Caco-2 (cell line): ENCODE measurements at regions of chr2 and their contacts with region 1.

Region 1: DNA sequence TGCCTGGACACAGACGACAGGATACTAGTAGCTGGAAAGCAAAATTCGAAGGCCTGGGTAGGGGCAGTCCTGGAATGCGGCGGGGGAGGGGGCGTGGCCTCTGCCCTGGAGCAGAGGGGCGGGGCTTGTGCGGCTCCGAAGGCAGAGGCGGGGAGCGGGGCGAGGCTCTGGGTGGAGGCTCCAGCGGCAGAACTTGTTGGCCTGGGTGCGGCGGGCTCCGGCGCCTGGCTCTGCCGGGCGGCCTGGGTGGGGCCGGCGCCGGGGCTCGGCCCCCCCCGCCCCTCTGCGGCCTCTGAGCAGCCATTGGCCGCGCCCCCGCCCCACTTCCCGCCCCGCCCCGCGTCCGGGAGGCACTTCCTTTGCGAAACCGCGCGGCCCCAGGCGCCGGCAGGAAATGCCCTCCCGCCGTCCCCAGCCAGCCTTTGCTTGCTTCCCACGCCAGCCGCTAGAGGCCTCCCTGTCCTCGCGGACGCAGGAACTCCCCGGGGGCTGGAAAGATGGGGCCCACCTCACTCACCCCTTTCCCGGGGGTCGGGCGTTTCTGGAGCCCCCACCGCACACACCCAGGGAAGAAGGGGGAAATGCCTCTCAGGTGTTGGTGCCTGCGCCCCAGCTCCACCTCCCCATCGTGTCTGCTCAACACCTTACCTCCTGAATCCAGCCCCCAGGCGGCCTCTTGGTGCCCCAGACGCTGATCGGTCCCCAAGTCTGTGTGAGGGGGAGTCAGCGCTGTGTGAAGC is 6.7 kb downstream of the CTDSP1 start:
- DNase-seq: peak; percentile 97 to 98
- H3K4me3 ChIP-seq: peak overlapping the region; percentile 39
- H3K4me3 Mint-ChIP-seq: peak overlapping the region; percentile 89
- H3K27ac Mint-ChIP-seq: peak overlapping the region; percentile 99
- H3K4me1 ChIP-seq: peaks cover 29% of the 10 kb centered on the region
- H3K4me1 Mint-ChIP-seq: peaks cover 38% of the 10 kb centered on the region
- H3K27me3 ChIP-seq: no peaks in the 10 kb centered on the region
- H3K27me3 Mint-ChIP-seq: no peaks in the 10 kb centered on the region
- CTCF ChIP-seq: peak; percentile 83 to 96

Region 2: DNA sequence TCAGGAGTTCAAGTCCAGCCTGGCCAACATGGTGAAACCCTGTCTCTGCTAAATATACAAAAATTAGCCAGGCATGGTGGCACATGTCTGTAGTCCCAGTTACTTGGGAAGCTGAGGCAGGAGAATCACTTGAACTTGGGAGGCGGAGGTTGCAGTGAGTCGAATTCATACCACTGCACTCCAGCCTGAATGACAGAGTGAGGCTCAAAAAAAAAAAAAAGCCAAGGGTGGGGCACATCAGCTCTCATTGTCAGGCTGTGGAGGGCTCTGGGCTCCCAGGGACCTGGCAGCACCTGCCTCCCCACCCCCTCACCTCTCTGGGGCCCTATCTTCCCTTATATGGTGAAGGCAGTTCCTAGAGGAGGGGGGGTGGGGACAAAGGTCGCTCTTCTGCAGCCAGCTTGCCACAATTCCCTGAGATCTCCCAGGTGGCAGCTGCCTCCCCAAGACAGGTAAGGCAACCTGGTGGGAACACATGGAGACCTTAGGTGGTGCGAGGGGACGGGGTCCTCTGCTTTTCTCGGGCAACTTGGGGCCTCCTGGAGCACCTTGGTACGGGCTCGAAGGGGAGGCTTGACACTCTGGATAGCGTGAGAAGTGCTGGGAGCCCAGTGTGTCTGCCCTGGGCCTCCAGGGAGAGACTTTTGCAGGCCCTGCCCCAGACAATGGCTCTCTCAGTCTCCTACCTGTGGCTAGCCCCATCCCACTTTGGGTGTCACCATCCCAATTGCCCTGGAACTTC is 12.5 kb after region 1 on chr2 and contains the start of gene VIL1:
- CTCF ChIA-PET with region 1: interaction called, 17 read pairs
- POLR2A ChIA-PET with region 1: interaction called, 5 read pairs
- intact Hi-C with region 1: loop called (anchors 1 kb)
- DNase-seq: peak; percentile 95 to 98
- H3K4me3 ChIP-seq: peak within 1 kb of the TSS; percentile 93
- H3K4me3 Mint-ChIP-seq: peak within 1 kb of the TSS; percentile 90
- H3K27ac Mint-ChIP-seq: peak within 1 kb of the TSS; percentile 88
- H3K4me1 ChIP-seq: peaks cover 42% of the 10 kb centered on the region
- H3K4me1 Mint-ChIP-seq: peaks cover 33% of the 10 kb centered on the region
- H3K27me3 ChIP-seq: no peaks in the 10 kb centered on the region
- H3K27me3 Mint-ChIP-seq: no peaks in the 10 kb centered on the region
- CTCF ChIP-seq: no peak
- total RNA-seq, gene VIL1: 401 and 448 TPM in 2 replicates

Region 3: GRCh38 chr2:218444692-218445357 is 38.4 kb after region 1 on chr2:
- CTCF ChIA-PET with region 1: interaction called, 8 read pairs
- POLR2A ChIA-PET with region 1: no interaction called
- intact Hi-C with region 1: loop called (anchors 1 kb)
- DNase-seq: peak; percentile 84 to 91
- H3K4me3 ChIP-seq: no peak overlapping the region
- H3K4me3 Mint-ChIP-seq: peak overlapping the region; percentile 60
- H3K27ac Mint-ChIP-seq: peak overlapping the region; percentile 74
- H3K4me1 ChIP-seq: peaks cover 61% of the 10 kb centered on the region
- H3K4me1 Mint-ChIP-seq: peaks cover 31% of the 10 kb centered on the region
- H3K27me3 ChIP-seq: no peaks in the 10 kb centered on the region
- H3K27me3 Mint-ChIP-seq: no peaks in the 10 kb centered on the region
- CTCF ChIP-seq: no peak

Region 4: GRCh38 chr2:218466016-218466521 is 59.7 kb after region 1 on chr2:
- CTCF ChIA-PET with region 1: interaction called, 3 read pairs
- POLR2A ChIA-PET with region 1: no interaction called
- intact Hi-C with region 1: loop called (anchors 1 kb)
- DNase-seq: no peak
- H3K4me3 ChIP-seq: no peak overlapping the region
- H3K4me3 Mint-ChIP-seq: no peak overlapping the region
- H3K27ac Mint-ChIP-seq: no peak overlapping the region
- H3K4me1 ChIP-seq: no peaks in the 10 kb centered on the region
- H3K4me1 Mint-ChIP-seq: no peaks in the 10 kb centered on the region
- H3K27me3 ChIP-seq: no peaks in the 10 kb centered on the region
- H3K27me3 Mint-ChIP-seq: no peaks in the 10 kb centered on the region
- CTCF ChIP-seq: peak; percentile 21 to 52

Region 5: DNA sequence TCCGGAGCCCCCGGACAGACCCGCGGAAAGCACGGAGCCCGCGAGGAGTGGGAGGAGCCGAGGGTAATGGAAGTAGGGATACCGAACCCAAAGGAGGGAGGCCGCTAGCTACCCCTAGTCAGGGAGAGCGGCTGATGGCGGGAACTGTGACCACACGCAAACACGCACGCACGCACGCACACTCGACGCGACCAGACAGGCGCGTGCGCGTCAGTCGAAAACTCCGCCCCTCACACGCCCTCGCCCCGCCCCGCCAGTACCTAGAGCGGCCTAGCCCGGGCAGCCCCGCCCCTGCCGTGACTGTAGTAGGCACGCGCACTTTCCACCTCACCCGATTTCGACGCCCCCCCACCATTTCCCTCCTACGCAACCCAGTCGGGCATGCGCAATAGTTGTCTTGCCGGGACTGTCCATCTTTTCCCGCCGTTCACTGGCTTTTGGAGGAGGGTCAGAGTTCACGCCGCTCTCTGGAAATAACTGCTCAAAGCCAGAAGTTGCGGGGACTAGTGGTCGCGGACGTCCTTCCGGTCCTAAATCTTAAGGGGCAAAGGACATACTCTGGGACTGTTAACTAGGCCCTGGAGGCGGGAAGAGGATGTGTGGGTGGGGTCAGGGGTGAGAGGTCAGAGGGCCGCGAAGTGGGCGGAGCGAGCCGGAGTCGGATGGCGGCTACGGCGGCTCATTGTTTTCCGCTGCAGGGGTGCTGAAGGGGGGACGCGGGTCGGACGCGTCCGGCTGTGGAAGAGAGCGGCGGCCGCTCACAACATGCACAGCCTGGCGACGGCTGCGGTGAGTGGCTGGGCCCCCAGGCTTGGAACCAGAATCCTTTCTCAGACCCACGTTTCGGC is 162.0 kb after region 1 on chr2 and contains the starts of genes CNOT9 and USP37:
- CTCF ChIA-PET with region 1: no interaction called
- POLR2A ChIA-PET with region 1: no interaction called
- intact Hi-C with region 1: loop called (anchors 1 kb)
- DNase-seq: peak; percentile 99 to 100
- H3K4me3 ChIP-seq: peak within 1 kb of the TSS; percentile 64
- H3K4me3 Mint-ChIP-seq: peak within 1 kb of the TSS; percentile 86
- H3K27ac Mint-ChIP-seq: peak within 1 kb of the TSS; percentile 86
- H3K4me1 ChIP-seq: peaks cover 15% of the 10 kb centered on the region
- H3K4me1 Mint-ChIP-seq: peaks cover 36% of the 10 kb centered on the region
- H3K27me3 ChIP-seq: no peaks in the 10 kb centered on the region
- H3K27me3 Mint-ChIP-seq: no peaks in the 10 kb centered on the region
- CTCF ChIP-seq: no peak
- total RNA-seq, gene CNOT9: 56.4 and 59.9 TPM in 2 replicates
- total RNA-seq, gene USP37: 18.6 and 22.2 TPM in 2 replicates

Region 6: GRCh38 chr2:218631837-218632236 is 225.5 kb after region 1 on chr2:
- CTCF ChIA-PET with region 1: no interaction called
- POLR2A ChIA-PET with region 1: no interaction called
- intact Hi-C with region 1: no loop called
- DNase-seq: no peak
- H3K4me3 ChIP-seq: no peak overlapping the region
- H3K4me3 Mint-ChIP-seq: no peak overlapping the region
- H3K27ac Mint-ChIP-seq: no peak overlapping the region
- H3K4me1 ChIP-seq: no peaks in the 10 kb centered on the region
- H3K4me1 Mint-ChIP-seq: no peaks in the 10 kb centered on the region
- H3K27me3 ChIP-seq: no peaks in the 10 kb centered on the region
- H3K27me3 Mint-ChIP-seq: no peaks in the 10 kb centered on the region
- CTCF ChIP-seq: no peak

Region 7: DNA sequence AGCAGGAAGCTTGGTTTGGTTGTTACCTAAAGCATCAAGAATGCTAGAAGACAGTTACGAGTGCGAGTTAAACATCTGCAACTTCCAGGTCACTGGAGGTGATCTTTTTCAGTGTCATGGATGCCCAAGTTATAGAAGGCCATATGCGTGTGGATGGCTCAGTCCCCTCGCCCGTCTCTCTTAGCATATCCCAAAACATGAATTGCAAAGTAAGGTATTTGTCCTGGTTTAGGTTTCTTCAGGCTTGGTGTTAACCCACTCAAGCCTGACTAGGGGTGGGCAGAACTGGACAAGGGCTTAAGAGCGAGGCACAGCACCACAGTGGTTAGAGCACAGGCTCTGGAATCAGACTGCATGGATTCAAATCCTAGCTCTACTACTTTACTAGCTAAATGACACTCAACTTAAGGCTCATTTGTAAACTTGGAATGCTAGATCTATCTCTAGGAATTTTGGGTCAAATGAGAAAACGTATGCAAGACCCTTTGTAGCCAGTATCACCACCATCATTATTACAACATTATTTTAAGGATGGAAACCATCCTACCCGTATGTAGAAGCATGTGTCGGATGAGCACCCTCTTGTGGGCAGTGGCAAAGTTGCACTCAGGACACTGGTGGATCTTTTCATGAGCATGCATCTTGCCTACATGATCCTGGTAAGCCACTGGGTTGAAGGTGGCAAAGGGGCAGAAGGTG is 241.9 kb after region 1 on chr2:
- CTCF ChIA-PET with region 1: no interaction called
- POLR2A ChIA-PET with region 1: no interaction called
- intact Hi-C with region 1: loop called (anchors 1 kb)
- DNase-seq: peak; percentile 60 to 62
- H3K4me3 ChIP-seq: no peak overlapping the region
- H3K4me3 Mint-ChIP-seq: no peak overlapping the region
- H3K27ac Mint-ChIP-seq: no peak overlapping the region
- H3K4me1 ChIP-seq: no peaks in the 10 kb centered on the region
- H3K4me1 Mint-ChIP-seq: no peaks in the 10 kb centered on the region
- H3K27me3 ChIP-seq: no peaks in the 10 kb centered on the region
- H3K27me3 Mint-ChIP-seq: no peaks in the 10 kb centered on the region
- CTCF ChIP-seq: peak; percentile 80 to 91